Dendritic cell treated with granulocyte-macrophage colony-stimulating factor and Interleukin-4, amounts not matched to agents 40 ng/mL and 50 ng/mL, for 4 days (primary cell): ENCODE measurements at regions of chr13 and their contacts with region 1.

Region 1: DNA sequence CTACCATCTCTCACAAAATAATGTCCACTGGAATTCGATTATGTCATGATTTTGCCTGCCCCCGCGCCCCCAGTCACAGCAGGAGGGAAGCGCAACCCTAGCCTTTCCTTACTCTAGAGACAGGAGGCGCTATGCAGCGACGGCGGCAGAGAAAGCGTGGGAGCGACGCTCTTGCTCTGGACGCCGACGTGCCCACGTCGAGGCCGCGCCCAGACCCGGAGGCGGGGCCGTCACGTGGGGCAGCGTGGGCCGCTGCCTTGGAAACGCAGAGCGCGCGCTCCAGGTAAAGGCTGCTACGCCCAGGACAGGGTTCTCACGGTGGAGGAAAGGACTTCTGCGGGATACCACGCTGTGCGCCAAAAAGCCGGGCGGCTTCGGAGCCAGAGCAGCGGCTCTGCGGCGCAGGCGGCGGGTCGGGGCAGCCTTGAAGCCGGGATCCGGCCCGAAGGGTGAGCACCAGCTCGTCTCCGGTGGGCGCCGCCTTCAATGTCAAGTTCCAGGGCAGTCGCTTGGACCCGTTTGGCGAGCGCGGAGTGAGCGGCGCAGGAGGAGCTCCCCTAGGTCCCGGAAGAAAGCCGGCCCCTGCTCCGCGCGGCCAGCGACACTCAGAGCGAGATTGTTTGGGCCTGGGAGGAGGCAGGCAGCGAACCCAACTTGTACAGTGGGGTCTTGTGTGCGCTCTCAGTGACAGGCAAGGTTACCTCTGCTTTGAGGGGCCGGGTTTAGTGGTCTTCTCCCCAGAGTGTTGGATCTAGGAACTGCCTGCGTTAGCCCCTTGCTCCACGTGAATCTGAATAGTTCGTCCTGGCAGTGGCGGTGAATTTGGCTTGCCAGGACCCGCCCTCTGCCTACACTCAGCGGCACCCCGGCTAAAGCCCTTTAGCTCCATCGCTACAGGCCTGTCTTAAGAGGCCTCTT is 121.7 kb downstream of the MRPL57 start:
- H3K4me3 Mint-ChIP-seq: peak overlapping the region; percentile 93
- H3K27ac Mint-ChIP-seq: peak overlapping the region; percentile 83
- H3K4me1 Mint-ChIP-seq: peaks cover 23% of the 10 kb centered on the region
- H3K27me3 Mint-ChIP-seq: no peaks in the 10 kb centered on the region

Region 2: GRCh38 chr13:20258208-20258962 is 1039.8 kb before region 1 on chr13:
- intact Hi-C with region 1: no loop called
- H3K4me3 Mint-ChIP-seq: no peak overlapping the region
- H3K27ac Mint-ChIP-seq: no peak overlapping the region
- H3K4me1 Mint-ChIP-seq: no peaks in the 10 kb centered on the region
- H3K27me3 Mint-ChIP-seq: peaks cover 5% of the 10 kb centered on the region

Region 3: DNA sequence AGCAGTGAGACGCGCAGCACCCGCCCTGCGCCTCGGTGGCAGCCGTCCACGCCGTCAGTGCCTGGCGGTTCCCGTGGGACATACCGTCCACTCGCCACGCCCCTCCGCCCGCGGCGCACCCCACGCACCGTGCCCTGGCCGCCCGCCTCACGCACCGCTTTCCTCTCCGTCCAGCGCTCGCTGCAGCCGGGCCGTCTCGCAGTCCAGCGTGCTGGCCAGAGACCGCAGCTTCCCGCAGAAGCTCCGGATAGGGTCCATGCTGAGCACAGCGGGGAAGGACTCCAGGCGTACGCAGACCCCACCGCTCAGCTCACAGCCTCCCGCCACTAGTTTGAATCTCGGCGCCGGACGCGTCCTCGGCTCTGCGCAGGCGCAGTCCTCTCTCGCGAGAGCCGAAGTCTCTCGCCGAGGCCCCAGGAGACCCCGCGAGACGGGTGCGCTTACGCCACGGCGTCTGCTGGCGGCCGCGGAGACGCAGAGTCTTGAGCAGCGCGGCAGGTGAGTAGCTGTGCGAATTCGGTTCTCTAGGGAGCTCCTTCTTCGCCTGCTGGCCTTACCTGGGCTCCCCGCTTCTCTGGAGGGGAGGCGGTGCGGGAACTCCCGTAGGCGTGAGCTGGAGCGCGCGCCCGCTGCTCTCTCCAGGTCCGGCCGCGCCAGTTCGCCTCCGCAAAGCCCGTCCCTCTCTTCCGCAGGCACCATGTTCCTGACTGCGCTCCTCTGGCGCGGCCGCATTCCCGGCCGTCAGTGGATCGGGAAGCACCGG is 121.8 kb before region 1 on chr13 and contains the starts of genes MRPL57 and SKA3:
- intact Hi-C with region 1: loop called (anchors 2 kb)
- H3K4me3 Mint-ChIP-seq: peak within 1 kb of the TSS; percentile 98
- H3K27ac Mint-ChIP-seq: peak within 1 kb of the TSS; percentile 96
- H3K4me1 Mint-ChIP-seq: peaks cover 11% of the 10 kb centered on the region
- H3K27me3 Mint-ChIP-seq: no peaks in the 10 kb centered on the region

Region 4: DNA sequence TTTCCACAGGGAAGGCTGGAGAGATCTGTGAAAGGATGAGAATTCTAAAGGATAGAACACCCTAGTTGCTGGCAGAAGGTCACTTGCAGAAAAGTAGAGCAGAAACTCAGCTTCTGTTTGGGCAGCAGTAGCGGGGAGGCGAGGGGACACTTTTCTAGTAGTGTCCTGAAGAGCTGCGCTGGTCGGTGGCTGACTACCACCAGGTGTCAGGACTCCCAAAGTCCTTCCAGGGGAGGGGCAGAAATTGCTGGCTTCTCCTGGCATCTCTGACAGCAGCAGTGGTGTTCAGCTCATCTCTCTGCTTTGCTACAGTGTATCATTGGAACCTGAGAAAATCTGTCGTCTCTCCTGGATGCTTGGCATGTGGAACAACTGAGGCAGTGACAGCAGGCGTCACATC is 40.0 kb after region 1 on chr13:
- intact Hi-C with region 1: no loop called
- H3K4me3 Mint-ChIP-seq: no peak overlapping the region
- H3K27ac Mint-ChIP-seq: no peak overlapping the region
- H3K4me1 Mint-ChIP-seq: no peaks in the 10 kb centered on the region
- H3K27me3 Mint-ChIP-seq: no peaks in the 10 kb centered on the region

Region 5: DNA sequence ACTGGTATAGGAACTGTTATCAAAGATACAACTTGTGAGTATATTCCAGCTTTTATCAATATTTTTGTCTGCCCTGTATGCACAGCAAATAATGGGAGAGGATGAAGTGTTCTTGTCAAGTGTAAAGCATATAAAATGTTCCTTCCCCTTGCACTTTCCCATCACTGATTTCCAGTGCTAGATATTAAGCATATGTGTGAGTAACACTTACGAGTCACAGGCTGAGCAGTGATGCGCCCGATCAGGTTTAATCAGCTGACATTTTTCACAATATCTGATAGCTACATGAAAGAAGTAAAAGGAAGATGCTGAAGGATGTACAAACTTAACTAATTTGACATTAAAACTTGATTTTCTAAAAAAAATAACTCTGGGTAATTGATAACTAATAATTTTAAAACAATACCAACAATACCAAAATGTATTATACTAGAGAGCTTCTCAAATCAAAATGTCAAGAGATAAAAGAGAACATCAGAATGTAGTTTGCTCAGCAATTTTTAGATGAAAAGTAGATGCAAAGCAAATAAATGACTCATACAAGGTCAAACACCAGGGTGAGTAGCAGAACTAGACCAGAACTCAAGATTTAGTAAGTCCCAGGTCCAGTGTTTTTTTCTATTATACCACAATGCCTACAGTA is 104.5 kb after region 1 on chr13:
- intact Hi-C with region 1: loop called (anchors 10 kb)
- H3K4me3 Mint-ChIP-seq: no peak overlapping the region
- H3K27ac Mint-ChIP-seq: no peak overlapping the region
- H3K4me1 Mint-ChIP-seq: no peaks in the 10 kb centered on the region
- H3K27me3 Mint-ChIP-seq: no peaks in the 10 kb centered on the region